Heart left ventricle (tissue), 16 donors: ENCODE measurements at regions of chr6 and their contacts with region 1.

Region 1: DNA sequence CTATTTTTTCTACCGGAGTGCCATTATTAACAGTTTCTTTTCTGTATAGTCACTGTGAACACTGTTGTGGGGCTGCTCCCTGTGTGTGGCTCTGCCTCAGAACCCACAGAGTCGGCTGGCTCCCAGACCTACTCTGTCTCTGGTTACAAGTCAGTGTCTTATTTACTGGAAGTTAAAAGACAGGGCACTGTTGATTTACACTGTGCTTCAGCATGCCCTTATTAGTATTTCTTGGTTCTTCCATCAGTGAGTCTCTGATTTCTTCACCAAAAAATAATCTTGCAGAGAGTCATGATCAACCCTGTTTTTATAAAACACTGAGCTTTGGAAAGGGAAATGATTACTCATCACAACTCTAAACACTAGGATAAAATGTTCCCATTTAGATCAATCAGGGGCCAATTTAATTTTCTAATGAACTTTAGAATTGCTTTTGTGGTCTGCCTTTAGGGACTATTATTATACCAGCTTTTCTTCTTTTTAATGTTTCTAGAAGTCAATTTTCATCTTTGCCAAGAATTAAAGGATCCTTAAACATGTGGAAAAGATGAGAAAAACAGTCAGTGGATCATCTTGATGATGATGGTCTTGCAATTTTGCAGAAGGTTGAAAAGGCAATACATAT is 92.6 kb downstream of the UTRN start:
- DNase-seq: no peak
- ATAC-seq: peak in 3 of 4 donors; percentile 36 to 43 (median 42)
- H3K4me3 ChIP-seq: no peak overlapping the region
- H3K27ac ChIP-seq: peak overlapping the region in 1 of 12 donors; percentile 4
- H3K4me1 ChIP-seq: peaks cover 0 to 51% (median 25%) of the 10 kb centered on the region in 12 donors
- H3K27me3 ChIP-seq: no peaks in the 10 kb centered on the region
- CTCF ChIP-seq: no peak
- POLR2A ChIP-seq: no peak

Region 2: GRCh38 chr6:143940011-143940597 is 437.6 kb before region 1 on chr6:
- intact Hi-C with region 1: no loop called
- DNase-seq: no peak
- ATAC-seq: no peak
- H3K4me3 ChIP-seq: no peak overlapping the region
- H3K27ac ChIP-seq: peak overlapping the region in 1 of 12 donors; percentile 0
- H3K4me1 ChIP-seq: peaks cover 0 to 17% (median 0%) of the 10 kb centered on the region in 12 donors
- H3K27me3 ChIP-seq: no peaks in the 10 kb centered on the region
- CTCF ChIP-seq: peak; percentile 31 to 65 (median 52)
- POLR2A ChIP-seq: no peak

Region 3: GRCh38 chr6:144343701-144344428 is 33.8 kb before region 1 on chr6:
- intact Hi-C with region 1: loop called in 1 of 10 experiments (anchors 5 kb)
- DNase-seq: peak in 2 of 5 donors; percentile 37 to 47
- ATAC-seq: peak; percentile 63 to 86 (median 76)
- H3K4me3 ChIP-seq: peak overlapping the region in 11 of 12 donors; percentile 19 to 54 (median 36)
- H3K27ac ChIP-seq: peak overlapping the region; percentile 40 to 82 (median 70)
- H3K4me1 ChIP-seq: peaks cover 17 to 99% (median 77%) of the 10 kb centered on the region in 12 donors
- H3K27me3 ChIP-seq: no peaks in the 10 kb centered on the region
- CTCF ChIP-seq: no peak
- POLR2A ChIP-seq: no peak